Panc1 (cell line): ENCODE measurements at regions of chr12 and their contacts with region 1.

Region 1: GRCh38 chr12:14995583-14996425 is 23.0 kb downstream of the PDE6H start:
- DNase-seq: peak; percentile 47
- ATAC-seq: no peak
- H3K4me3 ChIP-seq: no peak overlapping the region
- H3K27ac ChIP-seq: no peak overlapping the region
- H3K4me1 ChIP-seq: no peaks in the 10 kb centered on the region; the same call in 1 of the 2 replicates
- H3K27me3 ChIP-seq: no peaks in the 10 kb centered on the region; the same call in 1 of the 2 replicates
- CTCF ChIP-seq: peak; percentile 50; the same call in 1 of the 2 replicates

Region 2: DNA sequence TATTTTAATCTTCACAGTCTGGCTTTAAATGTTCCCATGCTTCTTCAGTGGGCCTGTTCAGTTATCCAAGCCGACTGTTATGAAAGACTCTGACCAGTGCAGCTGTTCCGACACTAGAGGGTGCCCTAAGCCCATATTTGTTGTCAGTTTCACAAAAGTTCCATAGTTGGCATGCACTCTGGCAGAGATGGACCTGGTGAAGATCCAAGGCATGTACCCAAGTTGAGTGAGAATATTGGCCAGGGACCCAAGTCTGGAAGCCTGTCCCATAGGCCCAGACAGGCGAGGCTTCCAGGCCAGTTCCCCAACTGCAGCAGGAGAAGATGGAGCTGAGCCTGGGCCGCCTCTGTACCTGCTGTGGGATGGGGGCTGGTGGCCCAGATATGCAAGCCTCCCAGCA is 272.0 kb before region 1 on chr12:
- CTCF ChIA-PET with region 1: no interaction called
- POLR2A ChIA-PET with region 1: no interaction called
- in situ Hi-C with region 1: no loop called
- intact Hi-C with region 1: loop called (anchors 10 kb)
- DNase-seq: no peak
- ATAC-seq: peak; percentile 77
- H3K4me3 ChIP-seq: no peak overlapping the region
- H3K27ac ChIP-seq: no peak overlapping the region
- H3K4me1 ChIP-seq: no peaks in the 10 kb centered on the region
- H3K27me3 ChIP-seq: no peaks in the 10 kb centered on the region
- CTCF ChIP-seq: peak; percentile 68

Region 3: GRCh38 chr12:14810953-14811483 is 184.8 kb before region 1 on chr12:
- CTCF ChIA-PET with region 1: interaction called, 7 read pairs
- POLR2A ChIA-PET with region 1: no interaction called
- in situ Hi-C with region 1: no loop called
- intact Hi-C with region 1: loop called (anchors 2 kb)
- DNase-seq: no peak
- ATAC-seq: peak; percentile 76; the same call in 1 of the 2 replicates
- H3K4me3 ChIP-seq: no peak overlapping the region
- H3K27ac ChIP-seq: no peak overlapping the region
- H3K4me1 ChIP-seq: no peaks in the 10 kb centered on the region
- H3K27me3 ChIP-seq: no peaks in the 10 kb centered on the region
- CTCF ChIP-seq: peak; percentile 74

Region 4: DNA sequence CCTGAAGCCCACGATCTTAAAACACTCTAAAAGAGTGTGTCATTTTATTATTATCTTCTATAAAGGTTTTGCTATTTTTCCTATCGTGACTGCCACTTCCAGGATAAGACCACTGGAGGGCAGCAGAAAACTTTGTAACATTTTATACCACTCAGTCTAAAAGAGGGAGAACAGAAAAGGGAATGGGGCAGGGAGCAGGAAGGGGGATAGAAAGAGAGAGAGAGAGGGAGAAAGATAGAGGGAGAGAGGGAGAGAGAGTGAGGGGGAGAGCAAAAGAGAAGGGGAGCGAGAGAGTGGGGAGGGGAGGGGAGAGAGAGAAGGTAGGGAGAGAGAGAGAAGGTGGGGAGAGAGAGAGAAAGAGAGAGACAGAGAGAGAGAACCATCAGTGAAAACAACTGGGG is 150.5 kb before region 1 on chr12:
- CTCF ChIA-PET with region 1: no interaction called
- POLR2A ChIA-PET with region 1: no interaction called
- in situ Hi-C with region 1: no loop called
- intact Hi-C with region 1: loop called (anchors 1 kb)
- DNase-seq: no peak
- ATAC-seq: 0 out of 2 replicates have a peak, but pooled peaks have one; percentile 60
- H3K4me3 ChIP-seq: no peak overlapping the region
- H3K27ac ChIP-seq: no peak overlapping the region
- H3K4me1 ChIP-seq: no peaks in the 10 kb centered on the region
- H3K27me3 ChIP-seq: no peaks in the 10 kb centered on the region
- CTCF ChIP-seq: peak; percentile 64